PC-3 (cell line): ENCODE measurements at regions of chr20 and their contacts with region 1.

Region 1: DNA sequence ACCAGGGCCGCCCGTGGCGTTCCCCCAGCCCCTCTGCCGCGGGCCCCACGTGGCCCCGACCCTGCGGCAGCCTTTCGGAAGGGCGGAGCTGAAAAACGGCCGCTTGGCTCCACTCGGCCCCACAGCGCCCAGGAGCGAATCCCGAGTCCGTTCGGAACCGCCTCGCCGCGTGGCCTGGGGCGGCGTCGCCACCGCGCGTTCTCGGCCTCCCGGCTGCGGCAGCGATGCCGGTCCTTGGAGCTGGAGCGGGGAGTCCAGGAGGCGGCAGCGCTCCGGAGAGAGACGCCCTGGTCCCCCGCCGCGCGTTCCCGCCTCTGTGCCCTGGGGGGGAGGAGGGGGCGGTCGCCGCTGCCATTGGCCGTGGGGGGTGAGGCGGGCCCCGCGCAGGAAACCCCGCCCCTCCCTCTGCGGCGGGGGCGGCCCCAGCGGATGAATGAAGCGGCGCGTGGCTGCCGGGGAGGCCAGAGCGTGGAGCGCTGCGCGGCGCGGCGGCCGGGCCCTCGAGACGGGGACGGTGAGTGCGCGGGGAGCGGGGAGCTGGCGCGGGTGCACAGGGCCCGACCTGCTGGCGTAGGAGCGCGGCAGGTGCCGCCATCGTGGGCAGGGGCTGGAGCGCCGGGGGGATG is at the start of gene SLCO4A1:
- DNase-seq: peak; percentile 89
- ATAC-seq: peak; percentile 73
- H3K4me3 ChIP-seq: peak within 1 kb of the TSS; percentile 95
- H3K27ac ChIP-seq: peak within 1 kb of the TSS; percentile 61
- H3K4me1 ChIP-seq: peaks cover 43% of the 10 kb centered on the region
- H3K27me3 ChIP-seq: no peaks in the 10 kb centered on the region
- CTCF ChIP-seq: no peak
- total RNA-seq, gene SLCO4A1: 161 and 162 TPM in 2 replicates

Region 2: DNA sequence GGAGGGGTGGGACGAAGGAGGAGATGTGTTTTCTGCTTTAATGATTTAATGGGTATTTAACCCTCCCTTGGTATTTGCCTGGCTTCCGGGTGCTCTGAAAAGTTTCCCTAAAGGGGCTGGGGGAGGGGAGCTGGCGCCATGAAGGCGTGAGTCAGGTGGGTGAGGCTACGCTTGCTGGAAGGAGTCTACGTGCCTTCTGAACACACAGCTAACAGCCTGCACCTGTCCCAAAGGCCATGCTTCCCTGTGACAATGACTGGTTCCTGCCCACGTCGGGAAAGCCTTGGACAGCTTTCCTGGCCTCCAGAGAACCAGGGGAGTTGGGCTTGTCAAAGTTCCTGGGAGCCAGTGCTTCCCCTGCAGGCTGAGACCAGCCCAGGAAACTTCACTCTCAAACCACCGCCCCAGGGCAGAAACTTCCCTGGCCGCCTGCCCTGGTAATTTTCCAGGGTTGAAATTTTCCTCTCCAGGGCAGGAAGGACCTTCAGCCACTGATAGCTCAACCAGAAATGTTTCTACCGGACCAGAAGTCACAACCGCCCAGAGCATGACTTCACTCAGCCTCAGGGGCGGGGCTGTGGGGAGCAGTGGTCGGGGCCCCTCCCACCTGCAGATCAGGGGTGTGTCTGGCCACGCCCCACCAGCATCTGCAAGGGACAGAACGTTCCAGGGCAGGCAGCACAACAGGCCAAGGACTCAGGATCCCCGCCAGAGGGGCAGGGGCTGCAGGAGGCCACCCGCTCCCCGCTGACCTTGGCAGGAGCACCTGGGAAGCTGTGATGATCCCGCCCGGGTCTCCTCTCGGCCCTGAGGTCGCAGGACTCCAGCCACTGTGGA is 18.4 kb before region 1 on chr20:
- CTCF ChIA-PET with region 1: interaction called, 5 read pairs
- POLR2A ChIA-PET with region 1: interaction called, 17 read pairs
- intact Hi-C with region 1: loop called (anchors 1 kb)
- DNase-seq: peak; percentile 98
- ATAC-seq: peak; percentile 63
- H3K4me3 ChIP-seq: peak overlapping the region; percentile 45; the same call in 1 of the 2 replicates
- H3K27ac ChIP-seq: peak overlapping the region; percentile 98
- H3K4me1 ChIP-seq: peaks cover 60% of the 10 kb centered on the region
- H3K27me3 ChIP-seq: no peaks in the 10 kb centered on the region
- CTCF ChIP-seq: no peak

Region 3: GRCh38 chr20:62704301-62704948 is 62.3 kb after region 1 on chr20:
- CTCF ChIA-PET with region 1: no interaction called
- POLR2A ChIA-PET with region 1: interaction called, 19 read pairs
- intact Hi-C with region 1: no loop called
- DNase-seq: peak; percentile 99
- ATAC-seq: peak; percentile 55
- H3K4me3 ChIP-seq: 0 out of 2 replicates have a peak overlapping the region, but pooled peaks have one; percentile 3
- H3K27ac ChIP-seq: peak overlapping the region; percentile 97
- H3K4me1 ChIP-seq: peaks cover 40% of the 10 kb centered on the region
- H3K27me3 ChIP-seq: no peaks in the 10 kb centered on the region
- CTCF ChIP-seq: 0 out of 2 replicates have a peak, but pooled peaks have one; percentile 23